A673 (cell line): ENCODE measurements at regions of chr9 and their contacts with region 1.

Region 1: DNA sequence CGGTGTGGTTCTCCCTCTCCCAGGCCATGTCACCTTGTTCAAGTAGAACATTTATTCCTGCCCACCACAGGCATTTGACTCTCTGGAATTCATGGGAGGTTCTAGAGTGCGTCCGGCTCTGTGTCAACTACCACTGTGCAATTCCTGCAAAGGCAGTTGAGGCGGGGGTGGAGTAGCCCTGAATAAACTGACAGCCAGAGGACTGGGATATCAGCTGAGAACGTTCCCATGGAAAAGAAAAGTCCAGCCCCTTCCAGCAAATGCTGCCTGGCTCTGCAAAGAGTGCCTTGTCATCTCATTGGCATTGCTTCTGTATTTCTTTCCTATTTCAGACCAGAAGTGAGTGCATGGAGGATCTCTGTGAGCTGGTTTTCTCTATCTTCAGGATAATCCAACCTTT is 18.9 kb upstream of the MEGF9 start:
- DNase-seq: no peak
- H3K4me3 ChIP-seq: no peak overlapping the region
- H3K27ac ChIP-seq: no peak overlapping the region
- H3K4me1 ChIP-seq: no peaks in the 10 kb centered on the region
- H3K27me3 ChIP-seq: no peaks in the 10 kb centered on the region
- CTCF ChIP-seq: no peak

Region 2: GRCh38 chr9:120592210-120592609 is 141.0 kb before region 1 on chr9:
- CTCF ChIA-PET with region 1: no interaction called
- POLR2A ChIA-PET with region 1: interaction called, 13 read pairs
- intact Hi-C with region 1: no loop called
- DNase-seq: no peak
- H3K4me3 ChIP-seq: no peak overlapping the region
- H3K27ac ChIP-seq: no peak overlapping the region
- H3K4me1 ChIP-seq: no peaks in the 10 kb centered on the region
- H3K27me3 ChIP-seq: no peaks in the 10 kb centered on the region
- CTCF ChIP-seq: no peak